ENCODE measurements at regions of chr3 and their contacts with region 1.

Region 1: GRCh38 chr3:161423911-161424522 is 52.7 kb upstream of the SPTSSB start:
- DNase-seq: peak in 1 of 2 experiments; percentile 32
- H3K4me3 ChIP-seq: no peak overlapping the region
- H3K4me3 Mint-ChIP-seq: no peak overlapping the region
- H3K27ac Mint-ChIP-seq: no peak overlapping the region
- H3K4me1 ChIP-seq: peaks cover 31% of the 10 kb centered on the region
- H3K4me1 Mint-ChIP-seq: peaks cover 9% of the 10 kb centered on the region
- H3K27me3 ChIP-seq: no peaks in the 10 kb centered on the region
- H3K27me3 Mint-ChIP-seq: no peaks in the 10 kb centered on the region
- CTCF ChIP-seq: peak; percentile 36 to 52

Region 2: GRCh38 chr3:160565442-160566403 is 858.3 kb before region 1 on chr3 and contains the start of gene KPNA4:
- CTCF ChIA-PET with region 1: no interaction called
- POLR2A ChIA-PET with region 1: no interaction called
- intact Hi-C with region 1: loop called (anchors 5 kb)
- DNase-seq: peak; percentile 97 to 98
- H3K4me3 ChIP-seq: peak within 1 kb of the TSS; percentile 50
- H3K4me3 Mint-ChIP-seq: peak within 1 kb of the TSS; percentile 88
- H3K27ac Mint-ChIP-seq: peak within 1 kb of the TSS; percentile 90
- H3K4me1 ChIP-seq: peaks cover 6% of the 10 kb centered on the region
- H3K4me1 Mint-ChIP-seq: peaks cover 16% of the 10 kb centered on the region
- H3K27me3 ChIP-seq: no peaks in the 10 kb centered on the region
- H3K27me3 Mint-ChIP-seq: no peaks in the 10 kb centered on the region
- CTCF ChIP-seq: no peak
- total RNA-seq, gene KPNA4: 53.5 and 60.5 TPM in 2 replicates

Region 3: GRCh38 chr3:160754855-160755747 is 668.9 kb before region 1 on chr3:
- CTCF ChIA-PET with region 1: no interaction called
- POLR2A ChIA-PET with region 1: no interaction called
- intact Hi-C with region 1: loop called (anchors 5 kb)
- DNase-seq: peak; percentile 89 to 92
- H3K4me3 ChIP-seq: peak overlapping the region; percentile 63
- H3K4me3 Mint-ChIP-seq: peak overlapping the region; percentile 85
- H3K27ac Mint-ChIP-seq: peak overlapping the region; percentile 90
- H3K4me1 ChIP-seq: peaks cover 11% of the 10 kb centered on the region
- H3K4me1 Mint-ChIP-seq: no peaks in the 10 kb centered on the region
- H3K27me3 ChIP-seq: no peaks in the 10 kb centered on the region; the same call in 1 of the 2 replicates
- H3K27me3 Mint-ChIP-seq: peaks cover 11% of the 10 kb centered on the region
- CTCF ChIP-seq: no peak

Region 4: GRCh38 chr3:160948272-160948671 is 475.7 kb before region 1 on chr3:
- CTCF ChIA-PET with region 1: no interaction called
- POLR2A ChIA-PET with region 1: no interaction called
- intact Hi-C with region 1: loop called (anchors 5 kb)
- DNase-seq: peak; percentile 57 to 70
- H3K4me3 ChIP-seq: no peak overlapping the region
- H3K4me3 Mint-ChIP-seq: no peak overlapping the region
- H3K27ac Mint-ChIP-seq: no peak overlapping the region
- H3K4me1 ChIP-seq: no peaks in the 10 kb centered on the region; the same call in 1 of the 2 replicates
- H3K4me1 Mint-ChIP-seq: no peaks in the 10 kb centered on the region
- H3K27me3 ChIP-seq: no peaks in the 10 kb centered on the region
- H3K27me3 Mint-ChIP-seq: peaks cover 4% of the 10 kb centered on the region
- CTCF ChIP-seq: no peak

Region 5: GRCh38 chr3:161220850-161221753 is 202.9 kb before region 1 on chr3 and contains the start of gene NMD3:
- CTCF ChIA-PET with region 1: no interaction called
- POLR2A ChIA-PET with region 1: interaction called, 4 read pairs
- intact Hi-C with region 1: loop called (anchors 5 kb)
- DNase-seq: peak; percentile 95
- H3K4me3 ChIP-seq: peak within 1 kb of the TSS; percentile 86
- H3K4me3 Mint-ChIP-seq: peak within 1 kb of the TSS; percentile 80
- H3K27ac Mint-ChIP-seq: peak within 1 kb of the TSS; percentile 81
- H3K4me1 ChIP-seq: peaks cover 6% of the 10 kb centered on the region; the same call in 1 of the 2 replicates
- H3K4me1 Mint-ChIP-seq: peaks cover 6% of the 10 kb centered on the region
- H3K27me3 ChIP-seq: no peaks in the 10 kb centered on the region
- H3K27me3 Mint-ChIP-seq: no peaks in the 10 kb centered on the region
- CTCF ChIP-seq: no peak
- total RNA-seq, gene NMD3: 61.7 and 62.4 TPM in 2 replicates

Region 6: GRCh38 chr3:161305095-161305991 is 118.7 kb before region 1 on chr3:
- CTCF ChIA-PET with region 1: no interaction called
- POLR2A ChIA-PET with region 1: no interaction called
- intact Hi-C with region 1: loop called (anchors 1 kb)
- DNase-seq: peak in 1 of 2 experiments; percentile 26
- H3K4me3 ChIP-seq: no peak overlapping the region
- H3K4me3 Mint-ChIP-seq: no peak overlapping the region
- H3K27ac Mint-ChIP-seq: no peak overlapping the region
- H3K4me1 ChIP-seq: no peaks in the 10 kb centered on the region
- H3K4me1 Mint-ChIP-seq: no peaks in the 10 kb centered on the region
- H3K27me3 ChIP-seq: no peaks in the 10 kb centered on the region
- H3K27me3 Mint-ChIP-seq: no peaks in the 10 kb centered on the region
- CTCF ChIP-seq: peak; percentile 54 to 65

Region 7: DNA sequence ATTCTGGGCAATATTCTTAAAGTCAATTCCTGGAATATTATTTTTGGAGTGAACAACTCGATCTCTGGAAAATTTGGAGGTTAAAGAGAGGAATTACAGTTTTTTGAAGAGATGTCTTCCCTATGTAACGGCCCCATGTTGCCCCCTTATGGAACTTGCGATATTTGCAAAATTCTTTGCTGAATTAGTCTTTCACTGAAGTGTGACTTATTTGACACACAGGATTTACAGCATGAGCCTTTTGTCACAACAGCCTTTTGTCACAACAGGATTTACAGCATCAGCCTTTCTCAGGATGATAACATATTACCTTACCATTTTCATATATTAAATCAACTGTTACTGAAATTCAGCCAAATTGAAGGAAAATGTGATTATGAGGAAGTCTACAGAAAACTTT is 14.9 kb before region 1 on chr3:
- CTCF ChIA-PET with region 1: no interaction called
- POLR2A ChIA-PET with region 1: no interaction called
- intact Hi-C with region 1: loop called (anchors 1 kb)
- DNase-seq: peak; percentile 45 to 72
- H3K4me3 ChIP-seq: no peak overlapping the region
- H3K4me3 Mint-ChIP-seq: no peak overlapping the region
- H3K27ac Mint-ChIP-seq: peak overlapping the region; percentile 45
- H3K4me1 ChIP-seq: peaks cover 82% of the 10 kb centered on the region
- H3K4me1 Mint-ChIP-seq: peaks cover 17% of the 10 kb centered on the region
- H3K27me3 ChIP-seq: no peaks in the 10 kb centered on the region
- H3K27me3 Mint-ChIP-seq: no peaks in the 10 kb centered on the region
- CTCF ChIP-seq: peak; percentile 50 to 64